ENCODE measurements at regions of chr1 and their contacts with region 1.

Region 1: DNA sequence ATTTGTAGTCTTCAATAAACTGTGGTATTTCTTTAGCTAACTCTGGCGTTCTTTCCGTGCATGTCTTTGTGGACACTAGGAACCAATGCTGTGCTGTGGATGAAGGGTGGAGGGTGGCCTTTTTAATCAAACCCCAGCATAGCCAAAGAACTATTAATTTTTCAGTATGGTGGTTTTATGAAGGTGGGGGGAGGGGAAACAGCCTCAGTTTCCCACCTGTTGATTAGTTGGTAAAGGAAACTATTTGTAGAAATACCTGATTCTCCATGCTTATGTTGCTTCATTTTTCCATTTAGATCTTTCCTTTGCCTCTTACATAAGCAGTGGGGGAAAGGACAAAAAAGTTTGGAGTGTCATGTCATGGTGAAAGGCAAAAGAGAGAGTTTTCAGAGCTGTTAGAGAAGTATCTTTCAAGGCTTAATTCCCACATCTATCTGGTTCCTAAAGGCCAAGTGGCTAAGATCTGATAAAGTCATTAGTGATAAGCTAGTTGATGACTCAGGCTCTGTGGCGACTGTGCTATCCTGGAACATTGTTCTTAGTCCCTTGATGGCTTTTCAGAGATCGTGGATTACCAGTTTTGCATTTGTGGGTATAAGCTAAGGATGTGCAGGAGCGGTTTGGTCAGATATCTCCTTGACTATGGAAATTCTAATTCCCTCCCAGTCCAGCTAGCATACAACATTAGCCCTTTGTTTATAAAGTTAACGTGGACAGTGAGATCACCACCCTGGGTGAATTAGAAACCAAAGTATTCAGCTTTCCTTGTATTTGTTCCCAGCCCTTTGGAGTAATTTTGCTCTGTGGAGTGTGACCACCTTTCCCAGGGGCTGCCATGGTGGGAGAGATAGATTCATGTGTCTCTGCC is 8.7 kb upstream of the HAX1 start:
- DNase-seq: no peak

Region 2: GRCh38 chr1:154206196-154206595 is 57.5 kb before region 1 on chr1 and contains the start of gene CFAP141:
- intact Hi-C with region 1: loop called (anchors 10 kb)
- DNase-seq: peak in 4 of 42 donors; percentile 7 to 40 (median 24)

Measured in head of caudate nucleus (tissue), 42 donors.